ENCODE measurements at regions of chr14 and their contacts with region 1.

Region 1: DNA sequence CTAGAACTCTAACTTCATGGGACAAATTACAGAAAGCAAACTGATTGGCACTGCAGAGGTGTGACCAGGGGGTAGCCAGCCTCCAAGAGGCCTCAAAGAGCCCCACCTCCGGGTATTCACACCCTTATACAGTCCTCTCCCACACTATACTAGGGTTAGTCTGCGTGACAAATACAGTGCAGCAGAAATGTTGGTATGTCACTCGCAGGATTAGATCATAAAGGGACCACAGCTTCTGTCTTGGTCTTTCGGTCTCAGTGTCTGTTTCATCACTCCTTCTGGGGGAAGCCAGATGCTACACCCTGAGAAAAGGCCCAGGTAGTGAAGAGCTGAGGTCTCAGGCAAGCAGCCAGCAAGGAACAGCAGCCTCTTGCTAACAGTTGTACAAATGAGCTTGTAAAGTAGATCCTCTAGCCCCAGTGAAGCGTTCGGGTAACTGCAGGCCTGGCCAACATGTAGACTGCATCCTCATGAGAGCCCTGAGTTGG is 68.9 kb upstream of the SAV1 start:
- DNase-seq: peak; percentile 79
- ATAC-seq: peak; percentile 89
- H3K4me3 ChIP-seq: no peak overlapping the region
- H3K27ac ChIP-seq: peak overlapping the region; percentile 62
- H3K4me1 ChIP-seq: peaks cover 35% of the 10 kb centered on the region
- H3K27me3 ChIP-seq: no peaks in the 10 kb centered on the region
- CTCF ChIP-seq: no peak
- EP300 ChIP-seq: peak; percentile 66 to 78; a peak in 3 of 4 replicates
- POLR2A ChIP-seq: peak; percentile 46
- RAD21 ChIP-seq: 0 out of 2 replicates have a peak, but pooled peaks have one; percentile 11

Region 2: DNA sequence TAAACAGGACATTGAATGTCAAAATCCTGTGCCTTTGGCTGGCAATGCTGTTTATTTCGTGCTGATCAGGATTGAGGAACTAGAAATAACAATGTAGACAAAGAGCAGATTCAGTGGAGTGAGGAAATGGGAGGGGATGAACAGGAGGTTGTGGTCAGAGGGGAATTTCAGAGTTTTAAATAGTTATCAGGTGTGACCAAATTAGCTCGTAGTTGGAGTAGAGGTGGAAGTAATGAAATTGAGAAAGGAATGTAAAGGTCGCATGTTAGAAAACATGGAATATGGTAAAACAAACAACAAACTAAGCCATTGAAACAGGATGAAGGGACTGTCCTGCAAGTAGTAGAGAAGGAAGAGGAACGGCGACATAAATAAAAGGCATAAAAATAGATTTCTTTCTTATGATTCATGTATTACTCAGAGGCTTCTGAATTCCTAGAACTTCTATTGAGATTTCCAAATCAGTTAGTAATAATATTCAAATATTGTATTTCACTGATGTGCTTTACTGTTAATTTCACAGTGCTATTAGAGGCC is 59.4 kb before region 1 on chr14:
- CTCF ChIA-PET with region 1: interaction called, 3 read pairs
- POLR2A ChIA-PET with region 1: interaction called, 9 read pairs
- RAD21 ChIA-PET with region 1: interaction called, 4 read pairs
- SMC1A ChIA-PET with region 1: interaction called, 12 read pairs
- in situ Hi-C with region 1: no loop called
- intact Hi-C with region 1: no loop called
- DNase-seq: peak; percentile 61
- ATAC-seq: peak; percentile 92
- H3K4me3 ChIP-seq: peak overlapping the region; percentile 35; the same call in 1 of the 2 replicates
- H3K27ac ChIP-seq: peak overlapping the region; percentile 61
- H3K4me1 ChIP-seq: peaks cover 20% of the 10 kb centered on the region
- H3K27me3 ChIP-seq: no peaks in the 10 kb centered on the region
- CTCF ChIP-seq: no peak
- EP300 ChIP-seq: peak; percentile 46 to 81; a peak in 2 of 4 replicates
- POLR2A ChIP-seq: no peak
- RAD21 ChIP-seq: no peak

Region 3: DNA sequence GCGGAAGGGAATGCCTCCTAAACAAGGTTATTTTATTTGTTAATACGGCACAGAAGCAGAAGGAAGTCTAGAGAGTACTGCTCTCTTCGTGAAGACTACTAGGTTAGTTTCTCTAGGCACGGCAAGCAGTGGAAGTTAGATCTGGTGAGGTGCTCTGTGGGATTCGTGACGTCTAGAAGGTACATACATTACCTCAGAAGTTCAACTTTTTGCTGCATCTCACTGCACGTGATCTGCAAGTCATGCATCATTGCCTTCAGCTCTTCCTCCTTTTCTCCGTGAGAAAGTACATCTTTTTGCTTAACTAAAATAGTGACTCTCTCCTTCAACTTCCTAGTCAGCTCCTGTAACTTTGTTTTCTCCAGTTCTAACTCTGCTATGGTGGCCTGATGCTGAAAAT is 19.3 kb after region 1 on chr14:
- CTCF ChIA-PET with region 1: interaction called, 6 read pairs
- POLR2A ChIA-PET with region 1: interaction called, 15 read pairs
- RAD21 ChIA-PET with region 1: interaction called, 27 read pairs
- SMC1A ChIA-PET with region 1: interaction called, 40 read pairs
- in situ Hi-C with region 1: no loop called
- intact Hi-C with region 1: no loop called
- DNase-seq: no peak
- ATAC-seq: peak; percentile 75
- H3K4me3 ChIP-seq: no peak overlapping the region
- H3K27ac ChIP-seq: peak overlapping the region; percentile 51
- H3K4me1 ChIP-seq: peaks cover 11% of the 10 kb centered on the region
- H3K27me3 ChIP-seq: no peaks in the 10 kb centered on the region
- CTCF ChIP-seq: no peak
- EP300 ChIP-seq: no peak
- POLR2A ChIP-seq: no peak
- RAD21 ChIP-seq: no peak

Region 4: GRCh38 chr14:50785457-50786063 is 48.6 kb after region 1 on chr14:
- CTCF ChIA-PET with region 1: interaction called, 6 read pairs
- POLR2A ChIA-PET with region 1: interaction called, 4 read pairs
- RAD21 ChIA-PET with region 1: interaction called, 5 read pairs
- SMC1A ChIA-PET with region 1: interaction called, 11 read pairs
- in situ Hi-C with region 1: no loop called
- intact Hi-C with region 1: no loop called
- DNase-seq: no peak
- ATAC-seq: no peak
- H3K4me3 ChIP-seq: no peak overlapping the region
- H3K27ac ChIP-seq: peak overlapping the region; percentile 5
- H3K4me1 ChIP-seq: peaks cover 59% of the 10 kb centered on the region
- H3K27me3 ChIP-seq: no peaks in the 10 kb centered on the region
- CTCF ChIP-seq: no peak
- EP300 ChIP-seq: no peak
- POLR2A ChIP-seq: no peak
- RAD21 ChIP-seq: no peak

Measured in GM12878 (cell line).